ENCODE measurements at regions of chr11 and their contacts with region 1.

Region 1: GRCh38 chr11:117226388-117227385 is 5.2 kb downstream of the PCSK7 start:
- DNase-seq: peak in 1 of 2 donors; percentile 58
- ATAC-seq: peak; percentile 58 to 81 (median 71)
- H3K4me3 ChIP-seq: no peak overlapping the region
- H3K27ac ChIP-seq: peak overlapping the region in 1 of 10 donors; percentile 38
- H3K4me1 ChIP-seq: peaks cover 14 to 40% (median 26%) of the 10 kb centered on the region in 9 donors
- H3K27me3 ChIP-seq: no peaks in the 10 kb centered on the region
- CTCF ChIP-seq: peak; percentile 71 to 90 (median 83)

Region 2: DNA sequence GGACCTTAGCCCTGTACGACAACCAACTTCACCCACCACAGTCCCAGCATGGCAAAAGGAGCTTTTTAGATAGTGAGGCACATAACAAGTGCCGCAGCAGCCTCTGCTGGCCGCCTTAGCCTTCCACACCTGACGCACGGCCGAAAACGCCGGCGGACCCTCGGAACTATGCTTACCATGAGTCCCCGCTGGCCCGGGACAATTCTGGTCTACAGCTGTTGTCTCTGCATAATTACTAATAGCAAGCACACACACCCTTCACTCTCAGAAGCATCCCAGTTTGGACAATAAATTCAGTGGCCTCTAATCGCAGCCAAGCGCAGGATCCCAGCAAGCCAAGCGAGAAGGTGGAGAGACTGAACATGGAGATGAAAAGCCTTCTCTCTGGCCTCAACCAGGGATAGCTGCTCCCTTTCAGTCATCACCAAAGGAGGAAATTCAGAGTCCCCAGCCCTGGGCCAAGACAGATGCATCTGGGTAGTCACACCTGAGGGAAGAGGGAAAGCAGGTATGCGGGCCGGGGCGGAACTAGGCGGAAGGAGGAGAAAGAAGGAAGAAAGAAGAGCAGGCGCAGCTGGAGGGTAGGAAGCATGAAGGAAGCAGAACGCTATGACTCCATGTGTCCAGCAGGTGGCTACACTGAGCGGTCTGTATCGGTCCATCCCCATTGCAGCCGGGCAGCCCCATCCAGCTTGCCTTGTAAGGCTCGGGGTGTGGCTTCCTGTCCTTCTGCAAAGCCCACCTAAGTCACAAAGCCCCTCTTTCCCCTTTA is 494.2 kb before region 1 on chr11:
- intact Hi-C with region 1: loop called in 1 of 10 experiments (anchors 5 kb)
- DNase-seq: peak; percentile 44 to 45
- ATAC-seq: peak; percentile 62 to 78 (median 73)
- H3K4me3 ChIP-seq: no peak overlapping the region
- H3K27ac ChIP-seq: no peak overlapping the region
- H3K4me1 ChIP-seq: peaks cover 0 to 16% (median 5%) of the 10 kb centered on the region in 9 donors
- H3K27me3 ChIP-seq: peaks cover 0 to 13% (median 8%) of the 10 kb centered on the region in 7 donors
- CTCF ChIP-seq: peak; percentile 60 to 90 (median 81)

Region 3: DNA sequence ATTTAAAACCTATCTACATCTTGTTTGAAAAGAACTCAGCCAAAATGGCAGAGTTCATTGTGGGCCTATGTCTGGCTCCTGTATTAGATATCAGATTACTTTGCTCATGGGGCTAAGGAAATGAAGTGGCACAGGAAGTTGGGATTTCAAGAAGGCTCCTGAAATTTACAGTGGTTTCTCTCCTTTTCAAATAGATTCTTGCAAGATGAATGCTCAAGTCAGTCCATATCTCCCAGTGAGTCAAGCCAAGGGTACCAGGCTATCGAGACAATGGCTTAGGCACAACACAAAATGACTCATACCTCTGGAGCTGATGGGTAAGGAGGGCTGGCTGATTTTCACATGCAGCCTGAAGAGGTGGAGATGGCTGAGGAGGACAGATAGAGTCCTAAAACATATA is 365.1 kb before region 1 on chr11:
- intact Hi-C with region 1: loop called in 1 of 10 experiments (anchors 10 kb)
- DNase-seq: no peak
- ATAC-seq: no peak
- H3K4me3 ChIP-seq: no peak overlapping the region
- H3K27ac ChIP-seq: no peak overlapping the region
- H3K4me1 ChIP-seq: peaks cover 0 to 23% (median 11%) of the 10 kb centered on the region in 9 donors
- H3K27me3 ChIP-seq: no peaks in the 10 kb centered on the region
- CTCF ChIP-seq: no peak

Region 4: GRCh38 chr11:116879800-116880625 is 346.7 kb before region 1 on chr11:
- intact Hi-C with region 1: loop called in 4 of 10 experiments (anchors 5 to 10 kb)
- DNase-seq: peak in 1 of 2 donors; percentile 48
- ATAC-seq: peak; percentile 63 to 94 (median 90)
- H3K4me3 ChIP-seq: no peak overlapping the region
- H3K27ac ChIP-seq: no peak overlapping the region
- H3K4me1 ChIP-seq: peaks cover 0 to 21% (median 3%) of the 10 kb centered on the region in 9 donors
- H3K27me3 ChIP-seq: no peaks in the 10 kb centered on the region
- CTCF ChIP-seq: peak; percentile 25 to 86 (median 72)

Region 5: DNA sequence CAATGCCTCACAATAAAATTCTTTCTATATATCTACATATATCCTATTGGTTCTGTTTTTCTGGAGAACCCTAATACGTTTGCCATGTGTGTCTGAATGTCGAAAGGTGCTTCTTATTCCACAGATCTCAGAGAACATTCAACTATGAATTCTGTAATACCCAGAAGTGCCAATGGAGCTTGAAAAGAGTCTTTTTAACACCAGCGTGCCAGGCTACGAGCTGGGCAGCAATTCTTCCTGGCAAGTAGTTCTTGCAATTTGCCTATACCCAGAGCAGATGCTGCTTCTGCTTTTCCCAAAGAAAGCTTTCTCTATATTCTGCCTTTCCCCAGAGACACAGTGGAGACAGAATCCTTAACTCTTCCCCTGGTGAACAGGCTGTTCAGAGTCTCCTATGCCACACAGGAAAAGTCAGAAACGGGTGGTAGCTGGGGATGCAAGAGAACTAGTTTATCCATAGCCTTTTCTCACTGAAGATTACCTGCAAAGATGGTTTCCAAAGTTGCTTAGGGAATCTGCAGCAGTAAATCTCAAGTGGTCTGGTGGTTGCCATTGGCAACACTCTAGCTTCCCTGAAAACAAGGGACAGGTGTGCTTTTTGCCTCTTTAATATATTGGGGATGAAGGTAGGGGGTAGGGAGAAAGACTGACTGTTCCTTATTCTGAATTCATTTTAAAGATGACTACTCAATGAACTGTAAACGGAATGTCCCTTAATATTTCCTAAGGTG is 99.4 kb before region 1 on chr11:
- intact Hi-C with region 1: loop called in 1 of 10 experiments (anchors 10 kb)
- DNase-seq: no peak
- ATAC-seq: no peak
- H3K4me3 ChIP-seq: no peak overlapping the region
- H3K27ac ChIP-seq: no peak overlapping the region
- H3K4me1 ChIP-seq: no peaks in the 10 kb centered on the region
- H3K27me3 ChIP-seq: no peaks in the 10 kb centered on the region
- CTCF ChIP-seq: no peak

Region 6: DNA sequence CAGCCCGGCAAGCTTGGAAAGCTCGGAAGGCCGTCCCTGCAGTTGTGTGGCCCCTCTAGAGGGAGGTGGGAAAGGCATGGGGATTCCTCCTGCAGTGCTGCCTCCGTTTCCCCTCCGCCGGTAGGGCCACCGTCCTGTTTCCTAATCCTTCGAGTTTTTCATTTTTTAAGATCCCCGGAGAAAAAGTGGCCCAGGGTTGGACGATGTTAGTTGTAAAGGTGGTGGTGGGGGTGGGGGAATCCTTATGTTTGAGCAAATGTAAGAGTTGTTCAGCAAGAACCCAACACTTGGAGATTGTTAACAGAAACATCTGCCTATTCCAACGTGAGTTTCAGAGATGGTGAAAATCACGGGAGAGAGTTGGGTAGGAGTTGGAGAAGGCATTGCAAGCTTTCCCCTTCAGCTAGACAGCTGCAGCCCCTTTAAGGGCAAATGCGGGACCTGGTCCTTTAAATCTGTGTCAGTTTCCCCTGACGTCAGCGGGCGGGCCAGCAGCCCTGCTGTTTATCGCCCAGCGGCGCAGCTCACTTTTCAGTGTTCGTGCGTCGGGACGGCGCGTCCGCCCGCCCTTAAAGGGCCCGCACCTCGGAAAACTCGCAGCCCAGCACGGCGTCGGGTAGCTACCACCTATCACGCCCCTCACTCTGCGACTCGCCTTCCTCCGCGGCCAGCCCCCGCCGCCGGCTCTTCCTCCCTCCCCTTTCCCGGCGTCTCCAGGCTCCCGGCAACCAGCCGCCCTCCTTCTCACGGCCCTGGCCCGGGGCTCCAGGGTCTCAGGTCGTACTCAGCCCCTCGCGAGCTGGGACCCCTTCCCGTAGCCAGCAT is 48.3 kb before region 1 on chr11 and contains the start of gene SIDT2:
- intact Hi-C with region 1: loop called in 9 of 10 experiments (anchors 2 to 5 kb)
- DNase-seq: peak; percentile 94 to 96
- ATAC-seq: peak; percentile 93 to 97 (median 96)
- H3K4me3 ChIP-seq: peak within 1 kb of the TSS; percentile 80 to 100 (median 89)
- H3K27ac ChIP-seq: peak within 1 kb of the TSS; percentile 81 to 98 (median 96)
- H3K4me1 ChIP-seq: peaks cover 14 to 41% (median 32%) of the 10 kb centered on the region in 9 donors
- H3K27me3 ChIP-seq: no peaks in the 10 kb centered on the region
- CTCF ChIP-seq: peak in 1 of 9 donors; percentile 5
- total RNA-seq, gene SIDT2: 16.2 to 33.6 (median 22.0) TPM